ENCODE measurements at regions of chr2 and their contacts with region 1.

Region 1: DNA sequence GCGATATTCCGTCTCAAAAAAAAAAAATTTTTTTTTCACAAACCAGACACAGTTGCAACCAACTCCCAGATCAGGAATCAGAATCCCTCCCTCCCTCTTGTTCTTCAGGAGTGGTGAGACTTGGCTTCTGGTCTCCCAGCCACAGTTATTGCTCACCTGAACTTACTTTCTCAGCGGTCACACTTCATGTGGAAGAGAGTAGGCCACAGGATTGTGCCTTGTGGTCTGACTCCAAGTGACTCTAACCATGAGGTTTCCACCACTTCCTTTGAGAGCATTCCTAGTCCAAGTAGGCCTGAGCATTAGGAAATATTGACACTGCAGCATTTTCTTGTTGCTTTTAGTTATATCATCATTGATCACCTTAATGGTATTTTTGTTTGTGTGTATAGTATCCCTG is 12.1 kb downstream of the FMNL2 start:
- DNase-seq: no peak
- ATAC-seq: no peak
- H3K4me3 ChIP-seq: no peak overlapping the region
- H3K27ac ChIP-seq: no peak overlapping the region
- H3K4me1 ChIP-seq: peaks cover 6 to 10% of the 10 kb centered on the region in 2 donors
- H3K27me3 ChIP-seq: no peaks in the 10 kb centered on the region
- CTCF ChIP-seq: no peak
- POLR2A ChIP-seq: no peak

Region 2: DNA sequence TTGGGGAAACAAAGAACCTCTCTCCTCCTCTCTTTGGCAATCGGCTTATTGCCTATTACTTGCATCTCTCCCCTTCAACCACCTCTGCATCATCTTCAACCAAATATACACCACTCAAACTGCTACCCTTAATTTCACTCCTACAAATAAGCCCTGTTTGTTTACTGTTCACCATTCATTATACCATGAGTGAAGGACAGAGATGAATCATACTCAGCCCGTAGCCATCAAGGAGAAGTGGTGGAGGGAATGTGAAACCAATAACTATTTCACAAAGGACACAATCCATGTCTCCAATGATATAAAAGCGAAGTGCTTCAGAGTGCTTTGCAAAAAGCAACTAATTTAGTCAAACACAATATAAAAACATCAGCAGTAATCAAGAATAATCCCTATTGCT is 325.0 kb before region 1 on chr2:
- in situ Hi-C with region 1: no loop called
- intact Hi-C with region 1: no loop called
- DNase-seq: no peak
- ATAC-seq: no peak
- H3K4me3 ChIP-seq: no peak overlapping the region
- H3K27ac ChIP-seq: no peak overlapping the region
- H3K4me1 ChIP-seq: no peaks in the 10 kb centered on the region
- H3K27me3 ChIP-seq: no peaks in the 10 kb centered on the region
- CTCF ChIP-seq: no peak
- POLR2A ChIP-seq: no peak

Region 3: GRCh38 chr2:152292991-152293390 is 54.1 kb before region 1 on chr2:
- in situ Hi-C with region 1: no loop called
- intact Hi-C with region 1: no loop called
- DNase-seq: no peak
- ATAC-seq: no peak
- H3K4me3 ChIP-seq: no peak overlapping the region
- H3K27ac ChIP-seq: no peak overlapping the region
- H3K4me1 ChIP-seq: no peaks in the 10 kb centered on the region
- H3K27me3 ChIP-seq: no peaks in the 10 kb centered on the region
- CTCF ChIP-seq: no peak
- POLR2A ChIP-seq: no peak

Region 4: GRCh38 chr2:152395103-152395502 is 48.0 kb after region 1 on chr2:
- in situ Hi-C with region 1: loop called in 1 of 4 experiments (anchors 10 kb)
- intact Hi-C with region 1: no loop called
- DNase-seq: no peak
- ATAC-seq: peak; percentile 23 to 51
- H3K4me3 ChIP-seq: peak overlapping the region in 1 of 4 donors; percentile 48
- H3K27ac ChIP-seq: peak overlapping the region; percentile 47 to 75 (median 64)
- H3K4me1 ChIP-seq: peaks cover 48 to 49% of the 10 kb centered on the region in 2 donors
- H3K27me3 ChIP-seq: no peaks in the 10 kb centered on the region
- CTCF ChIP-seq: no peak
- POLR2A ChIP-seq: no peak

Region 5: DNA sequence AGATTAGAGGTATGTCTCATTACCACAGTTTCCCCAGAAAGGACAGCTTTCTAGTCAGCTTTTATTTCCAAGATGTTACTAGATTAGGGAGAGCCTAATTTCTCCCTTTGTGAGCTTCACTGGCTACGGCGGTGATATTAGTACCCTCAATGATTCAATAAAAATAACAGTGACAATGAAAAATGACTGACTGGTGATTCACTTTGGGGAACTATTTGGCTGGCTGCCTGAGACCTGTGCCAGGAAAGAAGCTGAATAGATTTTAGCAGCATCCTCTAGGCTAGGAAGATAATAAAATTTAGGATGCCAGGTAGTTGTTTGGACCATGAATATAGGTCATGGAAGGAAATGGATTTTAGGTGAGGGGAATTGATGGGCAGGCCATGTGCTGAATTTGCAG is 166.6 kb after region 1 on chr2:
- in situ Hi-C with region 1: no loop called
- intact Hi-C with region 1: no loop called
- DNase-seq: peak in 1 of 2 donors; percentile 37
- ATAC-seq: peak in 1 of 2 donors; percentile 41
- H3K4me3 ChIP-seq: no peak overlapping the region
- H3K27ac ChIP-seq: no peak overlapping the region
- H3K4me1 ChIP-seq: peaks cover 15 to 29% of the 10 kb centered on the region in 2 donors
- H3K27me3 ChIP-seq: no peaks in the 10 kb centered on the region
- CTCF ChIP-seq: no peak
- POLR2A ChIP-seq: no peak

Measured in gastrocnemius medialis (tissue), 4 donors.